ENCODE measurements at regions of chr12 and their contacts with region 1.

Region 1: GRCh38 chr12:96132819-96133218 is 61.4 kb upstream of the ELK3 start:
- DNase-seq: peak in 1 of 2 experiments; percentile 32
- H3K4me3 ChIP-seq: no peak overlapping the region
- H3K27ac ChIP-seq: no peak overlapping the region
- H3K4me1 ChIP-seq: peaks cover 11% of the 10 kb centered on the region; the same call in 1 of the 2 replicates
- H3K27me3 ChIP-seq: no peaks in the 10 kb centered on the region
- CTCF ChIP-seq: peak; percentile 69

Region 2: GRCh38 chr12:95838125-95838524 is 294.7 kb before region 1 on chr12:
- CTCF ChIA-PET with region 1: no interaction called
- POLR2A ChIA-PET with region 1: no interaction called
- intact Hi-C with region 1: no loop called
- DNase-seq: peak in 1 of 2 experiments; percentile 24
- H3K4me3 ChIP-seq: no peak overlapping the region
- H3K27ac ChIP-seq: no peak overlapping the region
- H3K4me1 ChIP-seq: peaks cover 21% of the 10 kb centered on the region
- H3K27me3 ChIP-seq: no peaks in the 10 kb centered on the region
- CTCF ChIP-seq: no peak

Region 3: DNA sequence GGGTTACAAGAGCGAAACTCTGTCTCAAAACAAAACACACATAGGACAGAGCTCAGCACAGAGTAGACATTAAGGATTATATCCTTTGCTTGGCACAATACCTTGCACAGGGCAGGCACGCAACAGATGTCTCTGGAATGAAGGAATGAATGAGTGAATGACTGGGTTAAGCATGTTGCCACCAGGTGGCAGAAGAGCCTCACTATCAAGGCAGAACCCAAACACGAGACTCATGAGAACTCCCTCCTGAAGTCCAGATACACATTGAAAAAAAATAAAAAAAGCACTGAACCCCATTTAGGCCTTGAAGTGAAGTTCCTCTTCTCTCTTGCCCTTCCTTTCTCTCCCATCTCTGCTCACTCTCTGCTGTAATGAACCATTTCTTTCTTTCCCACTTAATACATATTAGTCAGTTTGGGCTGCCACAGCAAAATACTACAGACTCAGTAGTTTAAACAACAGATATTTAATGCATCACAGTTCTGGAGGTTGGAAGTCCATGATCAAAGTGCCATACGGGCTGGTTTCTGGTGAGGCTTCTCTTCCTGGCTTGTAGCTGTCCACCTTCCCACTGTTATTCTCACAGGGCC is 70.9 kb before region 1 on chr12:
- CTCF ChIA-PET with region 1: interaction called, 3 read pairs
- POLR2A ChIA-PET with region 1: interaction called, 3 read pairs
- intact Hi-C with region 1: loop called (anchors 1 kb)
- DNase-seq: peak; percentile 69 to 72
- H3K4me3 ChIP-seq: no peak overlapping the region
- H3K27ac ChIP-seq: 0 out of 2 replicates have a peak overlapping the region, but pooled peaks have one; percentile 14
- H3K4me1 ChIP-seq: peaks cover 9% of the 10 kb centered on the region; the same call in 1 of the 2 replicates
- H3K27me3 ChIP-seq: no peaks in the 10 kb centered on the region
- CTCF ChIP-seq: peak; percentile 89

Region 4: DNA sequence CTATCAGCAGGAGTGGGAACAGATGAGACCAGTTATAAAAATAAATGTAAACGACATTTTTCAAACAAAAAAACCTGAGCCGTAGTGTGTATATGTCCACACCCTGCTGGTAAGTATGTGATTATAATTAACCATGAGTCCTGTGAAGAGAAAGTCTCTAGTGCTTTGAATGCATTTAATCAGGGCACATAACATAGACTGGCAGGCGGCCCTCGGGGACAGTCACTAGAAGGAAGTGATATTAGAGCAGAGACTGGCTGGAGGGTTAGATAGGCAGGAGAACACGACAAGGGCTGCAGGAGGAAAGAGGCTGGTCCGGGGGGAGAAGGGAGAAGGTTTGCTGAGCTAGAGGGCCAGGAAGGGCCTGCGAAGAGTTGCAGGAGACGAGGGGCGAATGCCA is 37.5 kb after region 1 on chr12:
- CTCF ChIA-PET with region 1: no interaction called
- POLR2A ChIA-PET with region 1: no interaction called
- intact Hi-C with region 1: no loop called
- DNase-seq: no peak
- H3K4me3 ChIP-seq: no peak overlapping the region
- H3K27ac ChIP-seq: no peak overlapping the region
- H3K4me1 ChIP-seq: no peaks in the 10 kb centered on the region
- H3K27me3 ChIP-seq: no peaks in the 10 kb centered on the region
- CTCF ChIP-seq: no peak

Region 5: DNA sequence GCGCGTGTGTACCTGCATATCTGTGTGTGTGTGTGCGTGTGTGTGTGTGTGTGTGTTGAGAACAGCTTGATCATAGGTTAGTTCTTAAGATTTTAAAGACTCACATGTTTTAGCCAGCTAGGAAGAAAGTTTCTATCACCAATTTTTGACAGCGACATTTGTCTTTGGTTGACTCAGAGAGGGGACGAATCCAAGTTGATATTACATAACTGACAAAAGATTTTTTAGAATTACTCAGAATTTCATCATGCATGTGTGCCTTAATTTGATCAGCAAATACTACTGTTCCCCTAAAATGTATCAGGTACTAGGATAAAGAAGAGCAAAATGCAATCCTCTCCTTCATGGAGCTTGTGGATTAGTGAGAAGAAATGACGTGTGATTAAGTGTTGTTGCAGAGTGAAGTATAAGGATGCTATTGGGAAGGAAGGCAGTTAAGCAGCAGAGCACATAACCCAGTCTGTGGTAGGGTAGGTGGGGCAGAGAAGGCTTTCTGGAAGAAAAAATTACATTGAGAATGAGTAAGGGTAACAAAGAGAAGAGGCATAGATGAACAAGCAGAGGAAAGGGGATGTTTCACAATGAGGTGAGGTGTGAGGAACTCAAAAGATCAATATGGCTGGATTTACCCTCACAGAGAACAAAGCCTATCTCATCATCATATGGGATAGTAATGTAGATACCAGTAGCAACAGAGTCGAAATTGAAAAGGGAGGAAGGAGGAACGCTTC is 138.8 kb after region 1 on chr12:
- CTCF ChIA-PET with region 1: interaction called, 16 read pairs
- POLR2A ChIA-PET with region 1: no interaction called
- intact Hi-C with region 1: no loop called
- DNase-seq: no peak
- H3K4me3 ChIP-seq: no peak overlapping the region
- H3K27ac ChIP-seq: peak overlapping the region; percentile 18; the same call in 1 of the 2 replicates
- H3K4me1 ChIP-seq: no peaks in the 10 kb centered on the region
- H3K27me3 ChIP-seq: no peaks in the 10 kb centered on the region
- CTCF ChIP-seq: no peak

Region 6: DNA sequence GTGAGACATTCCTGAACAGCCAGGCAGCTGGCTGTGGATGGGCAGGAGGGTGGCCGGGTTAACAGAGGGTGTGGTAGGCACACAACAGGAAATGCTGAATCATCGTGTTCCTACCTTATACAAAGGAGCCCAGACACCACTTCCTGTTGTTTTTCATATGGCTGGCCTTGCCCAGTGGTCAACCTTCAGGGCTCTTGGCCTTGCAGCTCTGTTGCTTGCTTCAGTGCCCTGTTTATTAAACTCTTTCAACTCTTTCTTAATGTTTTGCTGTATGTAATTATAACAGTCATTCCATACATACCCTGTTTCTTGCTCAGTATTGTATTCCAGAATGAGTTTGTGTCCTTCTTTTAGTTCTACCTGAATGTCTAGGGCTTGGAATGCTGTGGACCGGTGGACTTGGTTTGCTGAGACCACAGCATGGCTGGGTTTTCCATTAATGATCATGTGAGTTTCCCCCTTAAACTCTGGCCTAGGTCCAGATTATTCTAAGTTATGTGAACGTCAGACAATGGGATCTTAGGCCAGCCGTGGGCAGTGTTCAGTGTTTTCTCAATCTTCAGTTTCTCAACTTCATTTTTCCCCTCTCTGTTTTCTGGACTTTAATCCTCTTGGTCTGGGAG is 368.4 kb after region 1 on chr12:
- CTCF ChIA-PET with region 1: no interaction called
- POLR2A ChIA-PET with region 1: interaction called, 15 read pairs
- intact Hi-C with region 1: no loop called
- DNase-seq: peak; percentile 72 to 85
- H3K4me3 ChIP-seq: peak overlapping the region; percentile 34; the same call in 1 of the 2 replicates
- H3K27ac ChIP-seq: peak overlapping the region; percentile 98
- H3K4me1 ChIP-seq: peaks cover 32% of the 10 kb centered on the region
- H3K27me3 ChIP-seq: no peaks in the 10 kb centered on the region
- CTCF ChIP-seq: no peak

Measured in PC-9 (cell line).